WTC11 (cell line): ENCODE measurements at regions of chr1 and their contacts with region 1.

Region 1: GRCh38 chr1:28877132-28877781 is 37.1 kb upstream of the EPB41 start:
- DNase-seq: peak; percentile 83
- ATAC-seq: peak; percentile 63
- H3K4me3 Mint-ChIP-seq: no peak overlapping the region
- H3K27ac Mint-ChIP-seq: no peak overlapping the region
- H3K4me1 Mint-ChIP-seq: peaks cover 6% of the 10 kb centered on the region
- H3K27me3 Mint-ChIP-seq: no peaks in the 10 kb centered on the region
- CTCF ChIP-seq: peak; percentile 93

Region 2: GRCh38 chr1:28736450-28737306 is 140.6 kb before region 1 on chr1 and contains the start of gene YTHDF2:
- CTCF ChIA-PET with region 1: interaction called, 16 read pairs
- POLR2A ChIA-PET with region 1: interaction called, 10 read pairs
- DNase-seq: peak; percentile 98
- ATAC-seq: peak; percentile 88
- H3K4me3 Mint-ChIP-seq: peak within 1 kb of the TSS; percentile 94
- H3K27ac Mint-ChIP-seq: peak within 1 kb of the TSS; percentile 100
- H3K4me1 Mint-ChIP-seq: peaks cover 40% of the 10 kb centered on the region
- H3K27me3 Mint-ChIP-seq: no peaks in the 10 kb centered on the region
- CTCF ChIP-seq: peak; percentile 86
- total RNA-seq, gene YTHDF2: 111 to 126 TPM (median 114 TPM) in 3 replicates

Region 3: DNA sequence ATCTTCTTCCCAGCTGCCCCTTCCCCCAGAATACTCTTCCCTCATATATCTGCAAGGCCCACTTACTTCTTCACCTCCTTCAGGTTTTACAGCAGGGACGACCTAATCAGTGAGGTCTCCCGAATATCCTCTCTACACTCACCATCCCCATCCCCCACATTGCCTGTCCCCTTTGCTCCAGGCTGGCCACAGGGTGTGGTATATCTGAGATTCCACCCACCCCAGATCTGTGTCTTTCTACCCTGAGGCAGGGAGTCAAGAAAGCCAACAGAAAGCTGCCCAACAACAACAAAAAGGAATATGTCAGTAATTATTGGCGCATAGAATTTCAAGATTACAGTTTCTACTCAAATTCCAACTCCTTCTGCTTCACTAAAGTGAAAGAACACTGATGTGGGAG is 95.2 kb before region 1 on chr1:
- CTCF ChIA-PET with region 1: interaction called, 179 read pairs
- POLR2A ChIA-PET with region 1: interaction called, 4 read pairs
- DNase-seq: no peak
- ATAC-seq: no peak
- H3K4me3 Mint-ChIP-seq: no peak overlapping the region
- H3K27ac Mint-ChIP-seq: no peak overlapping the region
- H3K4me1 Mint-ChIP-seq: peaks cover 9% of the 10 kb centered on the region
- H3K27me3 Mint-ChIP-seq: no peaks in the 10 kb centered on the region; the same call in 1 of the 2 replicates
- CTCF ChIP-seq: no peak

Region 4: GRCh38 chr1:28811766-28812668 is 65.2 kb before region 1 on chr1 and contains the start of gene OPRD1:
- CTCF ChIA-PET with region 1: interaction called, 38 read pairs
- POLR2A ChIA-PET with region 1: no interaction called
- DNase-seq: peak; percentile 54
- ATAC-seq: peak; percentile 58
- H3K4me3 Mint-ChIP-seq: peak within 1 kb of the TSS; percentile 61
- H3K27ac Mint-ChIP-seq: no peak within 1 kb of the TSS
- H3K4me1 Mint-ChIP-seq: peaks cover 19% of the 10 kb centered on the region
- H3K27me3 Mint-ChIP-seq: peaks cover 43% of the 10 kb centered on the region
- CTCF ChIP-seq: no peak
- total RNA-seq, gene OPRD1: 2.2 to 3.1 TPM (median 2.5 TPM) in 3 replicates

Region 5: GRCh38 chr1:28860332-28861073 is 16.8 kb before region 1 on chr1:
- CTCF ChIA-PET with region 1: interaction called, 13 read pairs
- POLR2A ChIA-PET with region 1: no interaction called
- DNase-seq: no peak
- ATAC-seq: no peak; the same call in 1 of the 2 replicates
- H3K4me3 Mint-ChIP-seq: no peak overlapping the region
- H3K27ac Mint-ChIP-seq: no peak overlapping the region
- H3K4me1 Mint-ChIP-seq: 0 out of 2 replicates have a peak, but pooled peaks cover 3% of the 10 kb centered on the region
- H3K27me3 Mint-ChIP-seq: no peaks in the 10 kb centered on the region
- CTCF ChIP-seq: no peak

Region 6: GRCh38 chr1:29197585-29197924 is 320.3 kb after region 1 on chr1:
- CTCF ChIA-PET with region 1: interaction called, 57 read pairs
- POLR2A ChIA-PET with region 1: interaction called, 4 read pairs
- DNase-seq: peak; percentile 27
- ATAC-seq: peak; percentile 96
- H3K4me3 Mint-ChIP-seq: no peak overlapping the region
- H3K27ac Mint-ChIP-seq: no peak overlapping the region
- H3K4me1 Mint-ChIP-seq: peaks cover 6% of the 10 kb centered on the region
- H3K27me3 Mint-ChIP-seq: no peaks in the 10 kb centered on the region
- CTCF ChIP-seq: no peak